Activated CD4-positive, alpha-beta T cell treated with anti-CD3 and anti-CD28 coated beads for 36 hours (primary cell): ENCODE measurements at regions of chrX and their contacts with region 1.

Region 1: DNA sequence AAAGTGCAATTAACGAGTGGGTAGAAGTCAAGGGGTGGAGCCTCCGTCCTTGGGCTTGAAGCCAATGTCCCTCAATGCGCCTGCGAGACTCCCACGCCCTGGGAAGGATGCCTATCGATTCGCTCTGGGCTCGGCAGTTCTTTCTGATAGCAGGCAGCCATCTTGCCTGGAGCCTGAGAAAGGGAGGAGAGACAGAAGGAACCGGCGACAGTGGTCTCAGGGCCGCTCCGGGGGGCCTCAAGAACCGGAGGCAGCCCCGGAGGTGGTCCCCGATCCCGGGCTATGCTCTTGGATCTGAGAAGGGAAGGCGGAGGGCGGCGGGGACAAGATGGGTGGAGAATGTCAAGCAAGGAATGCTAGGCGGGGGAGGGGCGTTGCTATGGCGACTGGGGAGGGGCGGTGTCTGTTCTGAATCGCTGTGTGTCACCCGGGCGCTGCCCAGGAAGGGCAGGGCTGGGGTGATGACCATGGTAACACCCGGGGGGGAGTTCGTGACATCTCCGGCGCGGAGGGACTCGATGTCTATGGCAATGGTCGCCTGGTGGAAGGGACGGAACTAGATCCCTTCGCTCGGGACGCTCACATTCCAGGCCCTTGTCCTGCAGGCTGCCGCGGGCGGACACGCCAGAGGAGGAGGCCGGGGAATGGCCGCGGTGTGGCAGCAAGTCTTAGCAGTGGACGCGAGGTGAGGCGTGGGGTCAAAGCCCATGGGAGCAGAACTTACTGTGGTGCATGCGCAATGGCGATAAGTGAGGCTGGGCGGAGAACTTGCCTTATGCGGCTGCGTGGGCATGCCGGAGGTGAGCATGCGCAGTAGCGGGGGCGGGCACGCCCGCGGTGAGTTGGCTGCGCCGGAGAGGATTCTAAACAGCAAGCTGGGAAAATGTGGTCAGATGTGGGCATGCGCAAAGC is at the start of gene WDR13:
- DNase-seq: peak; percentile 94
- ATAC-seq: peak; percentile 91
- H3K4me3 Mint-ChIP-seq: peak within 1 kb of the TSS; percentile 99
- H3K27ac Mint-ChIP-seq: peak within 1 kb of the TSS; percentile 98
- H3K4me1 Mint-ChIP-seq: peaks cover 8% of the 10 kb centered on the region
- H3K27me3 Mint-ChIP-seq: no peaks in the 10 kb centered on the region
- total RNA-seq, gene WDR13: 27.2 to 39.4 TPM

Region 2: GRCh38 chrX:48107717-48108116 is 489.9 kb before region 1 on chrX:
- CTCF ChIA-PET with region 1: no interaction called
- POLR2A ChIA-PET with region 1: no interaction called
- intact Hi-C with region 1: no loop called
- DNase-seq: no peak
- ATAC-seq: no peak
- H3K4me3 Mint-ChIP-seq: no peak overlapping the region
- H3K27ac Mint-ChIP-seq: no peak overlapping the region
- H3K4me1 Mint-ChIP-seq: peaks cover 2% of the 10 kb centered on the region
- H3K27me3 Mint-ChIP-seq: no peaks in the 10 kb centered on the region

Region 3: GRCh38 chrX:48475774-48476577 is 121.6 kb before region 1 on chrX and contains the start of gene FTSJ1:
- CTCF ChIA-PET with region 1: no interaction called
- POLR2A ChIA-PET with region 1: no interaction called
- intact Hi-C with region 1: loop called in 1 of 2 experiments (anchors 1 kb)
- DNase-seq: peak; percentile 88
- ATAC-seq: peak; percentile 91
- H3K4me3 Mint-ChIP-seq: peak within 1 kb of the TSS; percentile 93
- H3K27ac Mint-ChIP-seq: peak within 1 kb of the TSS; percentile 90
- H3K4me1 Mint-ChIP-seq: peaks cover 36% of the 10 kb centered on the region
- H3K27me3 Mint-ChIP-seq: no peaks in the 10 kb centered on the region
- total RNA-seq, gene FTSJ1: 73.0 to 93.7 TPM

Region 4: DNA sequence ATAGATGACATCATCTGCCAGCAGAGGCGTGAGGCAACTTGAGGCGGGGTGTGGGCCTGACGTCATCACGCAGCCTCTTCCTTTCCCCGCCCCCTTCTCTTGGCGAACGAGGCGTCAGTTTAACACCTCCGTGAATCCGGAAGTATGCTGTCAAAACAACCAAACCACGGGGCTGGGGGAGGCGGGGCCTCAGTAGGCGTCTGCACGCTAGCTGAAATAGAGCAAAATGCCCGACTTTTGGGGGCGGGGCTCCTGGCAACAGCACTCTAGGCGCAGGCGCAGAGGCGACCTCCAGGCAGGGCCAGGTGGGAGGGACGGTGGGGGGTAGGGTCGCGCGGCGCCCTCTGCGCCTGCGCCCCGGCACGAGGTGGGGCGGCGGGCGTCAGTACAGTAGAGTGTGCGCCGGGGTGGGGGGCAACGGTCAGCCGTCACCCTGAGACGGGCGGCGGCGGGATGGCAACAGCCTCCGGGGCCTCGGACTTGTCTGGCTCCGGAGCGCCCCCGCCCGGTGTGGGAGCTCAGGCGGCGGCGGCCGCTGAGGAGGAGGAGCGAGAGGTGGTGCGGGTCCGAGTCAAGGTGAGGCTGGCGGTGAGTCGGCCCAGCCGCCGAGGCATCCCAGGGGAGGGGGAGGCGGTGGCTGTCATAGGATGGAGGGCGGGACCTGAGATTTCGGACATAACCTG is 58.1 kb before region 1 on chrX and contains the start of gene TBC1D25:
- CTCF ChIA-PET with region 1: interaction called, 5 read pairs
- POLR2A ChIA-PET with region 1: no interaction called
- intact Hi-C with region 1: loop called in 1 of 2 experiments (anchors 1 kb)
- DNase-seq: peak; percentile 98
- ATAC-seq: peak; percentile 80
- H3K4me3 Mint-ChIP-seq: peak within 1 kb of the TSS; percentile 87
- H3K27ac Mint-ChIP-seq: peak within 1 kb of the TSS; percentile 89
- H3K4me1 Mint-ChIP-seq: peaks cover 15% of the 10 kb centered on the region
- H3K27me3 Mint-ChIP-seq: no peaks in the 10 kb centered on the region
- total RNA-seq, gene TBC1D25: 13.2 to 15.2 TPM

Region 5: GRCh38 chrX:48676106-48676892 is 78.7 kb after region 1 on chrX:
- CTCF ChIA-PET with region 1: no interaction called
- POLR2A ChIA-PET with region 1: no interaction called
- intact Hi-C with region 1: loop called in 1 of 2 experiments (anchors 1 kb)
- DNase-seq: peak; percentile 92
- ATAC-seq: peak; percentile 95
- H3K4me3 Mint-ChIP-seq: peak overlapping the region; percentile 90
- H3K27ac Mint-ChIP-seq: peak overlapping the region; percentile 91
- H3K4me1 Mint-ChIP-seq: peaks cover 19% of the 10 kb centered on the region
- H3K27me3 Mint-ChIP-seq: no peaks in the 10 kb centered on the region

Region 6: GRCh38 chrX:49079489-49080428 is 482.1 kb after region 1 on chrX and contains the start of gene WDR45:
- CTCF ChIA-PET with region 1: no interaction called
- POLR2A ChIA-PET with region 1: no interaction called
- intact Hi-C with region 1: loop called in 1 of 2 experiments (anchors 5 kb)
- DNase-seq: peak; percentile 84
- ATAC-seq: peak; percentile 84
- H3K4me3 Mint-ChIP-seq: peak within 1 kb of the TSS; percentile 93
- H3K27ac Mint-ChIP-seq: peak within 1 kb of the TSS; percentile 99
- H3K4me1 Mint-ChIP-seq: peaks cover 16% of the 10 kb centered on the region
- H3K27me3 Mint-ChIP-seq: no peaks in the 10 kb centered on the region
- total RNA-seq, gene WDR45: 22.4 to 23.9 TPM